Naive thymus-derived CD4-positive, alpha-beta T cell (primary cell): ENCODE measurements at regions of chr12 and their contacts with region 1.

Region 1: GRCh38 chr12:56189176-56189917 is at the start of gene SMARCC2:
- DNase-seq: peak; percentile 78 to 93 (median 82)
- ATAC-seq: peak; percentile 93
- H3K4me3 ChIP-seq: peak within 1 kb of the TSS; percentile 91
- H3K4me3 Mint-ChIP-seq: peak within 1 kb of the TSS; percentile 76 to 98 (median 95)
- H3K27ac ChIP-seq: peak within 1 kb of the TSS; percentile 92
- H3K27ac Mint-ChIP-seq: peak within 1 kb of the TSS; percentile 93 to 99 (median 98)
- H3K4me1 ChIP-seq: peaks cover 9 to 19% of the 10 kb centered on the region in 2 donors
- H3K4me1 Mint-ChIP-seq: peaks cover 37 to 55% (median 49%) of the 10 kb centered on the region in 7 donors
- H3K27me3 ChIP-seq: no peaks in the 10 kb centered on the region
- H3K27me3 Mint-ChIP-seq: peaks cover 0 to 4% (median 0%) of the 10 kb centered on the region in 5 donors
- total RNA-seq, gene SMARCC2: 118 to 187 (median 149) TPM

Region 2: DNA sequence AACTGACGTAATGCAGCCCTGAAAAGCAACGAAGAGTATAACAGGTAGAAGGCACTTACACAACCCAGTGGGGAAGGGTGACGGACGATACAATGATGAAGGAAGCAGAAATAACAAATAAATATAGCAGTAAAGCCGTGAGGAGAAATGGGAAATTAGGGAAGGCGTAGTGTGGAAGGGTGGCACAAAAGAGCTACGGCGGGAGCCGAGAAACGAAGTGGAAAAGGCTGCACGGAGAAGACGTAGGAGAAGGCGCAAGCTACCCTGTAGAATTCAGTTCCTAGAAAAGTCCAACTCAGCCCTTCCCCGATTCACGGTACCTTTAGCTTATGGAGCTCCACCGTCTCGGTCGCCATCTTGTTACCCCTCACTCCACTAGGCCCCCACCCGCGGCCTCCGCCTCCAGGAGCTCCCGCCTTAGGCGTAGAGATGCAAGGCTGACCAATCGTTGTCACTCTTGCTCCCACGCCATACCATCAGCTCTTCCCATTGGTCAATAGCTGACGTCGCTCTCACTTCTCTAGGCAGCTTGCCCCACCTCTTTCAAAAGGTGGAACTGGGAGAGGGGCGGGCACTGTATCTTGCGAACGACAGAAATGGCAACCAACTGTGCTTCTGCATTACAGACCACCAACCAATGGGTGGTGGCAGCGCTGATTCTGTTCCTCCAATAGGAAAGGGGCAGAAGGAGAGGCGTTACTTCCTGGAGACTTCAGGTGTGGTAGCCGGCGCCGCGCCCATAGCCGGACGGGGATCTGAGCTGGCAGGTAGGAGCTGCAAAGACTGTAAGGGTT is 371.8 kb before region 1 on chr12 and contains the starts of genes ORMDL2 and SARNP:
- CTCF ChIA-PET with region 1: no interaction called
- POLR2A ChIA-PET with region 1: no interaction called
- intact Hi-C with region 1: loop called in 1 of 2 experiments (anchors 5 kb)
- DNase-seq: peak; percentile 81 to 99 (median 98)
- ATAC-seq: peak; percentile 96
- H3K4me3 ChIP-seq: peak within 1 kb of the TSS; percentile 94
- H3K4me3 Mint-ChIP-seq: no peak within 1 kb of the TSS
- H3K27ac ChIP-seq: peak within 1 kb of the TSS; percentile 88
- H3K27ac Mint-ChIP-seq: no peak within 1 kb of the TSS
- H3K4me1 ChIP-seq: peaks cover 22 to 41% of the 10 kb centered on the region in 2 donors
- H3K4me1 Mint-ChIP-seq: peaks cover 32 to 45% (median 37%) of the 10 kb centered on the region in 7 donors
- H3K27me3 ChIP-seq: no peaks in the 10 kb centered on the region
- H3K27me3 Mint-ChIP-seq: no peaks in the 10 kb centered on the region
- total RNA-seq, gene ORMDL2: 12.3 to 67.3 (median 40.5) TPM
- total RNA-seq, gene SARNP: 28.0 to 73.0 (median 41.7) TPM

Region 3: DNA sequence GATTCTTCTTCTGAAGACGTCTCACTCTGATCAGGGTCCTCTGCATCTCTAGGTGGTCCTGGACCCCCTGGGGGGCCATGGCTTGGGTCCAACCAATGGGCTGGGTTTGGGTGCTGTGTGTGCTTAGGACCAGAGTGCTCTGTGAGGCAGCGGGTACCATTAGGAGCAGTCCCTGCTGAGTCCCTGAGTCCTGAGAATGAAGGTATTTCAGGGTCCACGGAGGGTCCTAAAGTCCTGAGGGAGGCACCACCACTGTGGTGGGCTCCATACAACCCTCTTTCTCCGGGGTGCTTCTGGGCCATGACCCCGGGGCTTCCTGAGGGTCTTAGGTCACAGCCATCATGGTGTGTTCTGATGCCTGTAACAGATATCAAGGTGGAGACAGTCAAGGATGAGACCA is 361.0 kb before region 1 on chr12:
- CTCF ChIA-PET with region 1: no interaction called
- POLR2A ChIA-PET with region 1: no interaction called
- intact Hi-C with region 1: no loop called
- DNase-seq: no peak
- ATAC-seq: no peak
- H3K4me3 ChIP-seq: peak overlapping the region; percentile 99
- H3K4me3 Mint-ChIP-seq: peak overlapping the region; percentile 88 to 99 (median 99)
- H3K27ac ChIP-seq: peak overlapping the region; percentile 70
- H3K27ac Mint-ChIP-seq: peak overlapping the region; percentile 85 to 95 (median 92)
- H3K4me1 ChIP-seq: peaks cover 40 to 42% of the 10 kb centered on the region in 2 donors
- H3K4me1 Mint-ChIP-seq: peaks cover 38 to 74% (median 63%) of the 10 kb centered on the region in 7 donors
- H3K27me3 ChIP-seq: no peaks in the 10 kb centered on the region
- H3K27me3 Mint-ChIP-seq: no peaks in the 10 kb centered on the region

Region 4: GRCh38 chr12:55899082-55899481 is 290.3 kb before region 1 on chr12:
- CTCF ChIA-PET with region 1: no interaction called
- POLR2A ChIA-PET with region 1: no interaction called
- intact Hi-C with region 1: no loop called
- DNase-seq: peak in 6 of 9 donors; percentile 2 to 23 (median 12)
- ATAC-seq: no peak
- H3K4me3 ChIP-seq: no peak overlapping the region
- H3K4me3 Mint-ChIP-seq: peak overlapping the region in 3 of 10 donors; percentile 1 to 8 (median 3)
- H3K27ac ChIP-seq: peak overlapping the region; percentile 14
- H3K27ac Mint-ChIP-seq: peak overlapping the region; percentile 50 to 92 (median 71)
- H3K4me1 ChIP-seq: peaks cover 0 to 6% of the 10 kb centered on the region in 2 donors
- H3K4me1 Mint-ChIP-seq: peaks cover 8 to 17% (median 13%) of the 10 kb centered on the region in 7 donors
- H3K27me3 ChIP-seq: no peaks in the 10 kb centered on the region
- H3K27me3 Mint-ChIP-seq: no peaks in the 10 kb centered on the region

Region 5: GRCh38 chr12:56127888-56128669 is 61.3 kb before region 1 on chr12 and contains the start of gene ESYT1:
- CTCF ChIA-PET with region 1: interaction called, 193 read pairs
- POLR2A ChIA-PET with region 1: interaction called, 192 read pairs
- intact Hi-C with region 1: loop called (anchors 1 kb)
- DNase-seq: peak; percentile 75 to 100 (median 98)
- ATAC-seq: peak; percentile 94
- H3K4me3 ChIP-seq: peak within 1 kb of the TSS; percentile 77
- H3K4me3 Mint-ChIP-seq: peak within 1 kb of the TSS; percentile 95 to 100 (median 98)
- H3K27ac ChIP-seq: peak within 1 kb of the TSS; percentile 84
- H3K27ac Mint-ChIP-seq: peak within 1 kb of the TSS; percentile 86 to 99 (median 91)
- H3K4me1 ChIP-seq: peaks cover 39 to 54% of the 10 kb centered on the region in 2 donors
- H3K4me1 Mint-ChIP-seq: peaks cover 40 to 76% (median 65%) of the 10 kb centered on the region in 7 donors
- H3K27me3 ChIP-seq: no peaks in the 10 kb centered on the region
- H3K27me3 Mint-ChIP-seq: no peaks in the 10 kb centered on the region
- total RNA-seq, gene ESYT1: 121 to 300 (median 221) TPM

Region 6: GRCh38 chr12:56158029-56158925 is 31.1 kb before region 1 on chr12 and contains the start of gene MYL6:
- CTCF ChIA-PET with region 1: interaction called, 5 read pairs
- POLR2A ChIA-PET with region 1: interaction called, 47 read pairs
- intact Hi-C with region 1: loop called (anchors 1 to 2 kb)
- DNase-seq: peak; percentile 58 to 97 (median 89)
- ATAC-seq: peak; percentile 91
- H3K4me3 ChIP-seq: peak within 1 kb of the TSS; percentile 89
- H3K4me3 Mint-ChIP-seq: peak within 1 kb of the TSS; percentile 94 to 99 (median 96)
- H3K27ac ChIP-seq: peak within 1 kb of the TSS; percentile 98
- H3K27ac Mint-ChIP-seq: peak within 1 kb of the TSS; percentile 88 to 99 (median 97)
- H3K4me1 ChIP-seq: peaks cover 24 to 26% of the 10 kb centered on the region in 2 donors
- H3K4me1 Mint-ChIP-seq: peaks cover 31 to 59% (median 54%) of the 10 kb centered on the region in 7 donors
- H3K27me3 ChIP-seq: no peaks in the 10 kb centered on the region
- H3K27me3 Mint-ChIP-seq: no peaks in the 10 kb centered on the region
- total RNA-seq, gene MYL6: 428 to 1,509 (median 467) TPM

Region 7: GRCh38 chr12:56258057-56258819 is 68.9 kb after region 1 on chr12 and contains the start of gene ANKRD52:
- CTCF ChIA-PET with region 1: interaction called, 5 read pairs
- POLR2A ChIA-PET with region 1: interaction called, 6 read pairs
- intact Hi-C with region 1: loop called (anchors 1 kb)
- DNase-seq: peak; percentile 69 to 92 (median 84)
- ATAC-seq: peak; percentile 99
- H3K4me3 ChIP-seq: peak within 1 kb of the TSS; percentile 99
- H3K4me3 Mint-ChIP-seq: peak within 1 kb of the TSS; percentile 87 to 97 (median 93)
- H3K27ac ChIP-seq: peak within 1 kb of the TSS; percentile 90
- H3K27ac Mint-ChIP-seq: peak within 1 kb of the TSS; percentile 83 to 94 (median 90)
- H3K4me1 ChIP-seq: peaks cover 18 to 19% of the 10 kb centered on the region in 2 donors
- H3K4me1 Mint-ChIP-seq: peaks cover 13 to 27% (median 22%) of the 10 kb centered on the region in 7 donors
- H3K27me3 ChIP-seq: no peaks in the 10 kb centered on the region
- H3K27me3 Mint-ChIP-seq: peaks cover 0 to 2% (median 0%) of the 10 kb centered on the region in 5 donors
- total RNA-seq, gene ANKRD52: 26.9 to 64.4 (median 40.7) TPM

Region 8: DNA sequence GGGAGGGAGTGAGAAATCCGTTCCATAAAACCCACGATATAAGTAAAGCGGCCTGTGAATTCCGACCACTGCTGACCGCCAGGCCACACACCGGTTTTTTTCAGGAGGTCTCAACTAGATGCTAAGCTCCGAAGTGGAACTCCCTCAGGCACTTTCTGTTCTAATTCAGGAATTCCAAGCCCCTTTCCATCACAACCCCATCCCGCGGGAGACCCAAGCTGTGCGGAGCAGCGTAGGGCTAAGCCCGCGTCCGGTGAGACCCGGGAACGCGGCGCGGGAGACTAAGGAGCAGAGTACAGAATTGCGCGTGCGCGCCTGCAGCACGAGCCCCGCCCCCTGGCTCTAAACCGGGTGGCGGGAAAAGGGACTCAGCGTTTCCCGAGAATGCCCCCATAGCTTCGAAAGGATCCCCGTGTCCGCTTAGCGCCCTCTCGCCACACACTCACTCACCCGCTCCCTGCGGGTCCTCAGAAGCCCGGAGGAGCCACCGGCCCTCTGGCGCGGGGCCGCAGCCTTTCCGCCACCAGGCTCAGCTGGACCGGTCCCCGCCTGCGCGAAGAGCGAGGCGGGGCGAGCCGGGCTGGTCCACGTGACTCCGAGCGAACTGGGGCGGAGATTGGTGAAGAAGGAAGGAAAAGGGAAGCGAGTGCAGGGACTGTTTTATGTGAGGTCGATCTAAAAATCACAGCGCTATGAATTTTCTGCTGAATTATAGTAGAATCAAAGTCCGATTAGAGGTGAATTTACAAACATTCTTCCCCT is 259.7 kb after region 1 on chr12 and contains the start of gene TIMELESS:
- CTCF ChIA-PET with region 1: no interaction called
- POLR2A ChIA-PET with region 1: no interaction called
- intact Hi-C with region 1: loop called in 1 of 2 experiments (anchors 5 kb)
- DNase-seq: peak; percentile 74 to 89 (median 85)
- ATAC-seq: peak; percentile 98
- H3K4me3 ChIP-seq: peak within 1 kb of the TSS; percentile 97
- H3K4me3 Mint-ChIP-seq: peak within 1 kb of the TSS; percentile 77 to 94 (median 92)
- H3K27ac ChIP-seq: peak within 1 kb of the TSS; percentile 74
- H3K27ac Mint-ChIP-seq: peak within 1 kb of the TSS; percentile 86 to 98 (median 93)
- H3K4me1 ChIP-seq: peaks cover 0 to 7% of the 10 kb centered on the region in 2 donors
- H3K4me1 Mint-ChIP-seq: peaks cover 12 to 36% (median 24%) of the 10 kb centered on the region in 7 donors
- H3K27me3 ChIP-seq: no peaks in the 10 kb centered on the region
- H3K27me3 Mint-ChIP-seq: no peaks in the 10 kb centered on the region
- total RNA-seq, gene TIMELESS: 4.4 to 42.3 (median 5.4) TPM

Region 9: DNA sequence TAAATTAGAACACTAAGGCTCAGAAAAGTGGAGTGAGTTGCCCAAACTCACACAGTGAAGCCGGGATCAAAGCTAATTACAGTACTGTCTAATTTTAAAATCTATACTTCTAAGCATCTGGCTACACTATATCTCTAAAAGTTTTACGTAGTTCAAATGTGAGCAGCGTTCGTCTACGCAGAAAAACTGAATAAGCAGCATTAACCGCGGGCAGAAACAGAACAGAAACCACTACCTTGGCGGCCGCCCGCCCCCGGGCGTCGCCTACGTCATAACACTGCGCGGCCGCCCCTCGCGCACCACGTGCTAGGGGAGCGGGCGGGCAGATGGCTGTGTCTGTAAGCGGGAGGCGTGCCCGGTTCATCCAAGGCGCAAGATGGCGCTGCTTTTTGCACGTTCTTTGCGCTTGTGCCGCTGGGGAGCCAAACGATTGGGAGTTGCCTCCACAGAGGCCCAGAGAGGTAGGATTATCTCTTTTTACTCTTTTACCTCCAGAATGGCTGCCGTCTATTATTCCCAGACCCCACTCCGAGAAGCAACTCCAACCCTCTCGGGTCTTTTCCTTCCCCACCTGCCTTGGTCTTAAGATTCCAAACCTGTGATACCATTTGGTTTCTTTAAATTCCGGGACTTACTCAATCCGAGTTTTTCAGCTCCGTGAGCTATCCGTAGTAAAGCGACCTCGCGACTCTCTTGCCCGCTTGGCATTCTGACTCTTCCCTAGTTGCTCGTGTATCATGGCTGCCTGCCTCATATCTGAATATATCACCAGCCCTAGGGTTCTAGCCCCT is 279.1 kb after region 1 on chr12 and contains the start of gene SPRYD4:
- CTCF ChIA-PET with region 1: interaction called, 20 read pairs
- POLR2A ChIA-PET with region 1: interaction called, 9 read pairs
- intact Hi-C with region 1: loop called (anchors 1 kb)
- DNase-seq: peak; percentile 89 to 97 (median 96)
- ATAC-seq: peak; percentile 99
- H3K4me3 ChIP-seq: peak within 1 kb of the TSS; percentile 99
- H3K4me3 Mint-ChIP-seq: peak within 1 kb of the TSS; percentile 90 to 99 (median 97)
- H3K27ac ChIP-seq: peak within 1 kb of the TSS; percentile 87
- H3K27ac Mint-ChIP-seq: peak within 1 kb of the TSS; percentile 92 to 99 (median 98)
- H3K4me1 ChIP-seq: peaks cover 12 to 20% of the 10 kb centered on the region in 2 donors
- H3K4me1 Mint-ChIP-seq: peaks cover 6 to 51% (median 26%) of the 10 kb centered on the region in 7 donors
- H3K27me3 ChIP-seq: no peaks in the 10 kb centered on the region
- H3K27me3 Mint-ChIP-seq: no peaks in the 10 kb centered on the region
- total RNA-seq, gene SPRYD4: 5.2 to 7.5 (median 7.2) TPM

Region 10: DNA sequence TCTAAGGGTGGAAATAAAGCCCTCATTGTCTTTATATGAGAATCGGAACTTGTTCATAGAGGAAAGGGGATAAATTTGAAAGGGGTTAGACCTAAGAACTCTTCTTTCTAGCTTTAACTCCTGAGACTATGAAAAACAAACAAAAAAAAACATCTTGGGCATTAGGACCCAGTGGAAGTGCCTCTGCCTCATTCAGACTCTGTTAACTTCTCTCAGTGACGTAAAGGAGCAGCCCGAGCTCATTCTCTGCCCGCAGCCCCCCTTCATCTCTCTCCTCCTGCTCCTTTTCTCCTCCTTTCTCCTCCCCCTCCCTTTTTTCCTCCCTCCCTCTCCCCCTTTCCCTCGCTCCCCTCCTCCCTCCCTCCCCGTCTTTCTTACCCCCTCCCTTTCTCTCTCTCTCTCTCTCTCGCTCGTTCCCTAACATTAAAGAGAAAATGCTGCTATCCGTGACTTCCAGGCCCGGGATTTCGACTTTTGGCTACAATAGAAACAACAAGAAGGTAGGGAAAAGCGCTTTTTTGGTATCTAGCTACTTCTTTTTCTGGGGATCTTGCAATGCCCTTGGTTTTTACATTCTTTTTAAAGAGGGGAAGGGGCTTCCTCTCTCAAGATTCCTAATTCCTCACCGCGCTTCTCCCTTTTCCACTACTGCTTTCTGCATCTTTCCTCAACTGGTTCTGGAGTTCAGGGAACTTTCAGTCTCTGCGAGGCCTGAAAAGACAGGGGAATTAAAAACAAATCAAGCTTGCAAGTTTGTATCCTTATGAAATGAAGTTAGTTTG is 332.4 kb after region 1 on chr12 and contains the start of gene RBMS2:
- CTCF ChIA-PET with region 1: no interaction called
- POLR2A ChIA-PET with region 1: no interaction called
- intact Hi-C with region 1: no loop called
- DNase-seq: peak in 8 of 9 donors; percentile 23 to 74 (median 58)
- ATAC-seq: peak; percentile 97
- H3K4me3 ChIP-seq: peak within 1 kb of the TSS; percentile 44
- H3K4me3 Mint-ChIP-seq: peak within 1 kb of the TSS; percentile 79 to 98 (median 91)
- H3K27ac ChIP-seq: peak within 1 kb of the TSS; percentile 70
- H3K27ac Mint-ChIP-seq: peak within 1 kb of the TSS; percentile 60 to 97 (median 82)
- H3K4me1 ChIP-seq: peaks cover 6 to 23% of the 10 kb centered on the region in 2 donors
- H3K4me1 Mint-ChIP-seq: peaks cover 25 to 40% (median 37%) of the 10 kb centered on the region in 7 donors
- H3K27me3 ChIP-seq: no peaks in the 10 kb centered on the region
- H3K27me3 Mint-ChIP-seq: peaks cover 0 to 2% (median 0%) of the 10 kb centered on the region in 5 donors
- total RNA-seq, gene RBMS2: 2.5 to 12.8 (median 5.5) TPM